ENCODE measurements at regions of chr2 and their contacts with region 1.

Region 1: GRCh38 chr2:118882709-118883210 is 35.3 kb upstream of the EN1 start:
- DNase-seq: peak; percentile 59
- CTCF ChIP-seq: peak; percentile 85

Region 2: DNA sequence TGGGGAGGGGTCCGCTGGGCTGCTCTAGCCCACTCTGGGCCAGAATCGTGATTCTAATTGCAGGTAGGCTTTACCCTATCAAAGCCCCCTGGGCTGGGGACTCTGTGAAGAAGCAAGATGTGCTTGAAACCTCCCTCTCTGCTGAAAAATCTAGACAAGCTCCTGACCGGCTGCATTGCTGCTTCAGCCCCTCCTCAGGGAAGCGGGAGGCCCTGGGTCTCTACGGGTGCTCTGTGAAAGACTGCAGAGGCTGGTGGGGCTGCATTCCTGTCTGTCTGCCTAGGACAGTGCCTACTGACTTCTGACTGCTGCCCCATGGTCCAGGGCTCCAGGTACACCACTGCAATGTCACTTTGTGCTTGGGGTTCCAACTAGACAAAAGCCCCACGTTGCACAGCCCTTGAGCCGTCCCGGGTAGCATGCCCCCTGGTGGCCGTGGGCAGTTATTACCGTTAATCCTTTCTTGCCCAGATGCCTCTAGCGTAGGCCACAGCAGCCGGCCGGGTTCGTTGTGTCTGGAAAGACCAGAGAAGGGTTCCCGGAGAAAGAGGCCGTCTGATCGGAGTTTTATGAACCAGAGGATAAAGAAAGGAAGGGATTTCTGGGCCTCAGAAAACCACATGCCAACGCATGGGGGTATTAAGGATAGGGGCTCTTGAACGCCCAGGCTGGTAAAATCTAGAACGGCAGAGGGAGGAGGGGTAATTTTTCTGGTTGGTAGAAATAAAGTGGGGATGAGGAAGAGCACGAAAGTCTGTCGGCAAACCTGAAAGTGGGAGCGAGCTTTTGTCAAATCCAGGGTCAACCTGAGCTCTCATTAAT is 291.7 kb after region 1 on chr2:
- in situ Hi-C with region 1: loop called (anchors 25 kb)
- DNase-seq: peak; percentile 75
- CTCF ChIP-seq: peak; percentile 78

Region 3: GRCh38 chr2:119311356-119311755 is 428.6 kb after region 1 on chr2:
- in situ Hi-C with region 1: loop called (anchors 25 kb)
- DNase-seq: no peak
- CTCF ChIP-seq: no peak

Region 4: GRCh38 chr2:119476301-119477021 is 593.7 kb after region 1 on chr2:
- in situ Hi-C with region 1: loop called (anchors 25 kb)
- DNase-seq: peak; percentile 88
- CTCF ChIP-seq: peak; percentile 89

Region 5: DNA sequence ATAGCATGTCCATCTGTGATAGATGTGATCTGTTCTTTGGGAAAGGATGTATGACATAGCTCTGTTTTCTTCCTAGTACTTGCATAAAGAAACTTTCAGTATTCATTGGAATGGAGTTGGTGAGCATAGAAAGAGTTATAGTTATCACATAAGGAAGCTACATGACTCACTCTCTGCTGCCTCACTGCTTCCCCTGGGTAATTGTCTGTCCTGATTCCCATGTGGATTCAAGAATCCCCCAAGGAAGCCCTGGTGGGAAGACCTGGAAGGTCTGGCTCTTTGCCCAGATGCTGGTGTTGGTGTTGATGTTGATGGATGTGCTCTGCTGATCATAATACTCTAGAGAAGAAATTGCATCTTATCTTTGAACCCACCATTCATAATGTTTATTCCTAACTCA is 937.5 kb after region 1 on chr2:
- in situ Hi-C with region 1: no loop called
- DNase-seq: no peak
- CTCF ChIP-seq: no peak